PC-3 (cell line): ENCODE measurements at regions of chr9 and their contacts with region 1.

Region 1: GRCh38 chr9:88441301-88442007 is 53.2 kb downstream of the SPIN1 start:
- DNase-seq: no peak
- ATAC-seq: no peak
- H3K4me3 ChIP-seq: no peak overlapping the region
- H3K27ac ChIP-seq: no peak overlapping the region
- H3K4me1 ChIP-seq: no peaks in the 10 kb centered on the region
- H3K27me3 ChIP-seq: no peaks in the 10 kb centered on the region
- CTCF ChIP-seq: no peak

Region 2: DNA sequence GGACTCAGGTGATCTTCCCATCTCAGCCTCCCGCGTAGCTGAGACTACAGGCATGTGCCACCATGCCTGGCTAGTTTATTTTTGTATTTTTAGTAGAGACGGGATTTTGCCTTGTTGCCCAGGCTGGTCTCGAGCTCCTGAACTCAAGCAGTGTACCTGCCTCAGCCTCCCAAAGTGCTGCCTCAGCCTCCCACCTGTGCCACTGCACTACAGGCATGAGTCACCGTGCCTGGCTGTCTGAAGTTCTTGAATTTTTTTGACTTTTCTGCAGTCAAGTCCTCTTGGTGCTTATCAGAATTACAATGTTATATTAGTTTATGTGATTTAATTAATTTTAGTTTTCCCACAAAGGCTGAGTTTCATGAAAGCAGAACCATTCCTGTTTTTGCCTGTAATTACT is 43.4 kb before region 1 on chr9:
- CTCF ChIA-PET with region 1: no interaction called
- POLR2A ChIA-PET with region 1: interaction called, 14 read pairs
- intact Hi-C with region 1: no loop called
- DNase-seq: no peak
- ATAC-seq: no peak
- H3K4me3 ChIP-seq: no peak overlapping the region
- H3K27ac ChIP-seq: no peak overlapping the region
- H3K4me1 ChIP-seq: peaks cover 18% of the 10 kb centered on the region
- H3K27me3 ChIP-seq: no peaks in the 10 kb centered on the region
- CTCF ChIP-seq: no peak

Region 3: DNA sequence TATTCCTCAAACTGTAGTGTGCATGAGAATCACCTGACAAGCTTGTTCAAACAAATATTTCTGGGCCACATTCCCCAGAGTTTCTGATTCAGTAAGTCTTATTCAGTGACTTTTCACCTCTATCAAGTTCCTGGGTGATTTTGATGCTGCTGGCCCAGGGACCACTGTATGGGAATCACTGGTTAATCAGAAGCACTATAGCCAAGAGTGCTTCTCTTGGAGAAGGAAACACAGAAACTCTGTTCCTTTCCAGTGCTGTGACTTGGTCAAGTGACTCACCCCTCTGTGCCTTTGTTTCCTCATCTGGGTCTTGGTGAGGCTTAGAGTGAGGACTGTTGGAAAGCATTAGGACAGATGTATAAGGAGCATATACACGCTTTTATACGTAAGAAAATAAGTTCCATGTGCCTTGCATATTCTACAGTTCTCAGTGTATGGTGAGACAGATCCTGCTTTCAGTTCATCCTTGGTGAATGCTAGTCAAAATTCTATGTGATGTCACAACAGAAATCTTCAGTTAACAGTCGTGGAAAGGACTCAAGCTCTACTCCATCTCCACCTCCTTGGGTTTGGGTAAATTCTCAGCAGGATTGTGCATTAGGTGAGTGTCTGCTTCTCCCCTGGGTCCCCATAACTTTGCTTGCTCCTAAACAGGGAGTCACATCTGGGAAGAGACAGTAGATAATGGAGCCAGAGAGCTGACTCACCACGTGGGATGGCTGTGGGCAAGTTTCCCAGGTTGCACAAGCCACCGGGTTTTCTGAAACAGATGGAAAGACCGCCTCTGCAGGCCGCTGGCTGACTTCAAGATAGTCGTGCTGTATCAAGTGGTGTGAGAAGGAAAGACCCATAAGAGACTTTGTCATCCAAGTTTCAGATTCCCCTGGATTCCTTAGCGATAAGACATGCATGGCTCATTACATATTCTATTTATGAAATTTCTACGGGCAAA is 210.5 kb after region 1 on chr9:
- CTCF ChIA-PET with region 1: no interaction called
- POLR2A ChIA-PET with region 1: no interaction called
- intact Hi-C with region 1: no loop called
- DNase-seq: peak; percentile 69
- ATAC-seq: peak; percentile 45
- H3K4me3 ChIP-seq: no peak overlapping the region
- H3K27ac ChIP-seq: no peak overlapping the region; the same call in 1 of the 2 replicates
- H3K4me1 ChIP-seq: peaks cover 5% of the 10 kb centered on the region; the same call in 1 of the 2 replicates
- H3K27me3 ChIP-seq: no peaks in the 10 kb centered on the region
- CTCF ChIP-seq: no peak